Heart left ventricle (tissue), 16 donors: ENCODE measurements at regions of chr1 and their contacts with region 1.

Region 1: DNA sequence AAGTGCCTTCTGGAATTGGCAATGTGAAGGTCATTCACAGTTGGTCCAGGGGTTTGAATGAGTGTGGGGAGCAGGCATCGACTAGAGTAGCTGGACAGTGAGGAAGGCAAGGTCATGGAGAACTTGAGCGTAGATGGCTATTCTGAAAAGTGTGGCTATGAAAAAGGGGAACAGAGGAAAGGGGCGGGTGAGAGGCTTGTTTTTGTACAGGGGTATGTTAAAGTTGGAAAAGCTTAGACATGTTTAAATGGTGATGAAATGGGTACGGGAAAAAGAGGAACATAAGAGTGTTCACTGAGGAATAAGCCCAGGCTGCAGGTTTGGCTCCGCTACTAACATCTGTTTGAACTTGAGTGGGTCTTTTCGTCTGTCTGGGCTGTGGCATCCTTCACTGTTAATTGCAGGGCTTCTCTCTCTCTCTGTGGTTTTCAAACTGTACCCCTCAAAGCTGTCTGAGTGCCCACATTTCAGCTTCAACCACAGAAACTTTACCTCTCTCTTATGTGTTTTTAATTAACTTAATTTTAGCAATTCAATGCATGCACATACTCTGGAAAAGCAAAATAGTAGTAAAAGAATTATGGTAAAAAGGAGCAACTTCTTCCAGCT is 70.8 kb upstream of the COA6 start:
- DNase-seq: no peak
- ATAC-seq: no peak
- H3K4me3 ChIP-seq: no peak overlapping the region
- H3K27ac ChIP-seq: no peak overlapping the region
- H3K4me1 ChIP-seq: peaks cover 0 to 8% (median 0%) of the 10 kb centered on the region in 12 donors
- H3K27me3 ChIP-seq: peaks cover 0 to 8% (median 0%) of the 10 kb centered on the region in 9 donors
- CTCF ChIP-seq: no peak
- POLR2A ChIP-seq: no peak

Region 2: DNA sequence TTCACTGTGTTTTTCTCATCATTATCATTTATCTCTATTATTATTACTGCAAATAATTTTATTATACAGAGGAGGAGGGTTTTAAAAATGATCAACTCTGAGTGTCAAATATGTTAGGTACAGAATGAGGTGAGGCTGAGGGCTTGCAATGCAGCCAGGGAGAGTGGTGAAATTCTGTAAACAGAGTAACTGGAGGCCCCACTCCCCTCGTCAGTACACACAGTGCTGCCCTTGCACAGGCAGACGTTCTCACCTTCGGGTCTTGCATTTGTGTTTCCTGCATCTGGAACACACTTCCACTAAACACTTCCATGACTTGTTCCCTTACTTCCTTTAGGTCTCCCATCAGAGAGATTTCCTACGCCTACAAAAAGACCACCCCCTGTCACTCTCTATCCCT is 46.5 kb after region 1 on chr1:
- intact Hi-C with region 1: loop called in 1 of 10 experiments (anchors 2 kb)
- DNase-seq: no peak
- ATAC-seq: no peak
- H3K4me3 ChIP-seq: no peak overlapping the region
- H3K27ac ChIP-seq: no peak overlapping the region
- H3K4me1 ChIP-seq: no peaks in the 10 kb centered on the region
- H3K27me3 ChIP-seq: peaks cover 0 to 18% (median 0%) of the 10 kb centered on the region in 9 donors
- CTCF ChIP-seq: no peak
- POLR2A ChIP-seq: no peak

Region 3: GRCh38 chr1:234373064-234373958 is 70.9 kb after region 1 on chr1 and contains the start of gene COA6:
- intact Hi-C with region 1: no loop called
- DNase-seq: peak; percentile 91 to 93 (median 91)
- ATAC-seq: peak; percentile 94 to 98 (median 97)
- H3K4me3 ChIP-seq: peak within 1 kb of the TSS; percentile 63 to 93 (median 79)
- H3K27ac ChIP-seq: peak within 1 kb of the TSS; percentile 91 to 100 (median 96)
- H3K4me1 ChIP-seq: peaks cover 3 to 24% (median 18%) of the 10 kb centered on the region in 12 donors
- H3K27me3 ChIP-seq: no peaks in the 10 kb centered on the region
- CTCF ChIP-seq: peak in 1 of 12 donors; percentile 3
- POLR2A ChIP-seq: peak in 1 of 2 donors; percentile 68
- total RNA-seq, gene COA6: 25.5 to 47.2 (median 33.0) TPM